GM10248 (cell line): ENCODE measurements at regions of chr2 and their contacts with region 1.

Region 1: GRCh38 chr2:216308576-216308975 is 63.7 kb downstream of the MARCHF4 start:
- DNase-seq: no peak
- CTCF ChIP-seq: no peak

Region 2: GRCh38 chr2:216206041-216206703 is 102.4 kb before region 1 on chr2:
- CTCF ChIA-PET with region 1: no interaction called
- POLR2A ChIA-PET with region 1: no interaction called
- DNase-seq: peak; percentile 46
- CTCF ChIP-seq: no peak

Region 3: DNA sequence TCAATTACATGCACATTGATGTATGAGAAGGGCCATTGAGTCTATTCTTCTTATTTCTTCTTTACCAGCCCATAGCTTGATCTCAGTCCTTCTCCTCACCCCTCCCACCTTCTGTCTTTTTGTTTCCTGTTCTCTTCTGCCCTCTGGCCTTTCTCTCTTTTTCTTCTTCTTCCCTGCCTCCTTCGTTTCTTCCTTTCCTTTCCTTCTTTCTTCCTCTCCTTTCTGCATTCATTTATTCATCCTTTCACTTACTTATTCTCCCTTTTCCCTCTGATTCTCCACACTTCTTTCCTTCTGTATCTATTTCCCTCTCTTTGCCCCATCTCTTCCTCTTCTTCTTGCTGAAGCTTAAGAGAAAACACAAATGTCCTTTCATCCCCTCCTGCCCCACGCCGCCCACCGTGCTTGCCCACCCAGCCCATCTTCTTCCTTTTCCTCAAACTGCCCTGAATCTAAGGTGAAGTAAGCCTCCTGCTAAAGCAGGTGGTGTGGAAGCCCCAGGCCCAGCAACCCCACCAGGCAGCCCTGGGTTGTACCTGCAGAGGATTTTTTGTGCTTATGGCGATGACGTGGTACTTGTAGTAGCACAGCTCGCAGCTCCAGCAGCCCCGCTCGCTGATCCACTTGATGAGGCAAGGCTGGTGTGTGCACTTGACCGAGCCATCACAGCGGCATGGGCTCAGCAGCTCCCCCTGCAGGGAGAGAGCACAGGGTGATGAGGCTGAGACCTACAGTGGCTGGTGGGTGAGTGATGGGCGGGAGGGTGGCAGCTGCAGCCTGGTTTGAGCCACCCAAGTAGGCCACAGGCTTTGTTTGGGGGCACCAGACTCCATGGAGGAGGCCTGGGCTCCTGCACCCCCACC is 25.3 kb before region 1 on chr2:
- CTCF ChIA-PET with region 1: interaction called, 17 read pairs
- POLR2A ChIA-PET with region 1: no interaction called
- DNase-seq: peak; percentile 59
- CTCF ChIP-seq: peak; percentile 44